Stomach (tissue), 19 donors: ENCODE measurements at regions of chr5 and their contacts with region 1.

Region 1: GRCh38 chr5:909086-909485 is 16.4 kb downstream of the TRIP13 start:
- DNase-seq: no peak
- H3K4me3 ChIP-seq: no peak overlapping the region
- H3K27ac ChIP-seq: no peak overlapping the region
- H3K4me1 ChIP-seq: peaks cover 0 to 18% (median 3%) of the 10 kb centered on the region in 4 donors
- H3K27me3 ChIP-seq: no peaks in the 10 kb centered on the region
- CTCF ChIP-seq: no peak
- EP300 ChIP-seq: no peak
- POLR2A ChIP-seq: no peak

Region 2: GRCh38 chr5:671459-672328 is 237.4 kb before region 1 on chr5:
- intact Hi-C with region 1: loop called (anchors 5 kb)
- DNase-seq: peak; percentile 78 to 92
- H3K4me3 ChIP-seq: peak overlapping the region; percentile 5 to 37 (median 18)
- H3K27ac ChIP-seq: peak overlapping the region in 2 of 5 donors; percentile 31 to 38
- H3K4me1 ChIP-seq: peaks cover 34 to 54% (median 44%) of the 10 kb centered on the region in 4 donors
- H3K27me3 ChIP-seq: peaks cover 0 to 31% (median 6%) of the 10 kb centered on the region in 3 donors
- CTCF ChIP-seq: peak in 5 of 7 experiments; percentile 79 to 97 (median 91)
- EP300 ChIP-seq: no peak
- POLR2A ChIP-seq: no peak